Activated CD4-positive, alpha-beta T cell treated with anti-CD3 and anti-CD28 coated beads for 36 hours (primary cell): ENCODE measurements at regions of chr7 and their contacts with region 1.

Region 1: GRCh38 chr7:149873074-149873969 is at the start of gene ATP6V0E2:
- DNase-seq: peak; percentile 96
- ATAC-seq: peak; percentile 84
- H3K4me3 Mint-ChIP-seq: peak within 1 kb of the TSS; percentile 82
- H3K27ac Mint-ChIP-seq: peak within 1 kb of the TSS; percentile 91
- H3K4me1 Mint-ChIP-seq: peaks cover 74% of the 10 kb centered on the region
- H3K27me3 Mint-ChIP-seq: no peaks in the 10 kb centered on the region
- total RNA-seq, gene ATP6V0E2: 33.9 to 41.3 TPM

Region 2: DNA sequence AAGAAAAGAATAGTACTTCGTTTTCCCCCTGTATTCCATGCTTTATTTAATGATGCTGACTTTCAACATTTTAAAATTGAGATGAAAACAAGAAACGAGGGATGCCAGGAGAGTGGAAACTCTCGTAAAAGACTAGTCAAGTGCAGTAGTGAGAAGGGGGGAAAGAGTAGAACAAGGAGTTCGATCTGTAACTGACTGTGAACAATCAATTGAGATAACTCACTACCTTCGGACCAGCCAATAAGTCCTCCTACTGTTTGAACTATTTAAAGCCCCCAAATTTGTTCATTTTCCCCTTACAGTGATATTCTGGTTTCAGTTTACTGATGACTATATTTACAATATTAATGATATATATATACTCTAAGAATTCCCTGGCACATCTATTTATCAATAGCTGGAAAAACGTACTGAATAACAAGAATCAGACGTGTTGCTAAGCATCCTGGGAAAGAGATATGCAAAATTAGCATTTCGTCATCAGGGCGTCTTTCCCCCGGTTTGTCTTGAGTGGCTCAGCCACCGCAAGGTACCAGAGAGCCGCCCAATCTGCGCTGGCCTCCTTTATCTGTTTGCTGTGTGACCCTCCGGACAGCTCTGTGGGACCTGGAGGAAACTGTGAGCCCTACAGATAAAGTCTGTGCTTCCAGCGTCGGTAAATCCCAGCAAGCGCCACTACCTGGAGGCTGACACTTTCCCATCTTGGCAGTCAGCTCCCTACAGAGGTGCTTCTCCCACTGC is 886.1 kb before region 1 on chr7:
- CTCF ChIA-PET with region 1: no interaction called
- POLR2A ChIA-PET with region 1: no interaction called
- intact Hi-C with region 1: loop called in 1 of 2 experiments (anchors 5 kb)
- DNase-seq: peak; percentile 88
- ATAC-seq: peak; percentile 84
- H3K4me3 Mint-ChIP-seq: peak overlapping the region; percentile 90
- H3K27ac Mint-ChIP-seq: peak overlapping the region; percentile 97
- H3K4me1 Mint-ChIP-seq: peaks cover 40% of the 10 kb centered on the region
- H3K27me3 Mint-ChIP-seq: peaks cover 2% of the 10 kb centered on the region

Region 3: DNA sequence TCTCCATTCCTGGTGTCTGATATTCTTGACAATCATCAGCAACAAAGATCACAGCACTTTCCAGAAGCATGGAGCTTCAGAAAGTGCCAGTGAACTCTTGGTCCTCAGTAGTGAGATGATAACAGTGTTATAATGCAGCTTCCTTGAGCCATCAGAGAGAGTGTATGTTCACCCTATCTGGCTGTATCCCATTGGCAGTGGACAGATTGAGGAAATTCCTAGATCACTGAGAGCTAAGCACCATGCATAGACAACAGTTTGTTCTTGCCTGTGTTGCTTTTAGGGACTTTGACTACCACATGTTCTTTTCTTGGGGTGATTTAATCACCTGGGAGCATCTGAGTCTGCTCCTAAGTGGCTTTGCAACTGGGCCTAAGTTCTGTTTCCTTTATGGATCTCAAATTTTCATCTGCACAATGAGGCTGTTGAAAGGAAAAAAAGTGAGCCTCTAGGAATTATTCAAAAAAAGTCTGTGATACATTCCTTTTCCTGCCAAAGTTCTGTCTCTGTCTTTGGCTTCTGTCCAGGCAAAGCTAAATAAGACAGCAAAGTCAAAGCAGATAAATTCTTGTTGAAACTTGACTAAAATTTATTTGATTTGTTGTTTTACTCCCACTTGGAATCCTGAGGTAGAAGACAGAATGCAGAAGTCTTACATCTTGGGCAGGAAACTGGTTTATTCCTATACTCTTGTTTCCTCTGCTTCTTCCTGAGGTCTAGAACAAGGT is 692.4 kb before region 1 on chr7:
- CTCF ChIA-PET with region 1: no interaction called
- POLR2A ChIA-PET with region 1: no interaction called
- intact Hi-C with region 1: no loop called
- DNase-seq: no peak
- ATAC-seq: no peak
- H3K4me3 Mint-ChIP-seq: no peak overlapping the region
- H3K27ac Mint-ChIP-seq: no peak overlapping the region
- H3K4me1 Mint-ChIP-seq: peaks cover 2% of the 10 kb centered on the region
- H3K27me3 Mint-ChIP-seq: no peaks in the 10 kb centered on the region

Region 4: DNA sequence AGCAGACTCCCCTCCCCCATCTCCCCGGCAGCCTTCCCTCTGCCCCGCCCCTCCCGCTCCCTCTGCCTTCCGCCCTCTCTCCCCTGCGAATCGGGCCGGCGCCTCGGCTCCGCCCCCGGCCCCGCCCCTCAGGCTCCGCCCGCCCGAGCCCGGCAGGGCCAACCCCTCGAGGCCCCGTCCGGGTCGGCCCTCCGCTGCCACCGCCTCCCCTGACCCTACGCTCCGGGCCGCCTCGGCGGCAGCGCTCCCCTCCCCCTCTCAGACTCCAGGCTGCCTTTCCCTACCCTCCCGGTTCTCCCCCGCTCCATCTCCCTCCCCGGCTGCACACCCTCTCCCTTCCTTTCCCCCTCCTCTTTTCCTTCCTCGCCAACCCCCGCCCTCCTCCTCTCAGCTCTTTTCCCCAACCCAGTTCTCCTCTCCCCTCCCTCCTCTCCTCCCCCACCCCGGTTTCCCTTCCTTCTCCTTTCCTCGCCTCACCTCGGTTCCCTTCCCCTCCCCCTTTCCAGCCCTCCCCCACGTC is 101.5 kb before region 1 on chr7:
- CTCF ChIA-PET with region 1: no interaction called
- POLR2A ChIA-PET with region 1: no interaction called
- intact Hi-C with region 1: loop called in 1 of 2 experiments (anchors 1 kb)
- DNase-seq: peak; percentile 93
- ATAC-seq: peak; percentile 98
- H3K4me3 Mint-ChIP-seq: peak overlapping the region; percentile 59
- H3K27ac Mint-ChIP-seq: no peak overlapping the region
- H3K4me1 Mint-ChIP-seq: peaks cover 2% of the 10 kb centered on the region
- H3K27me3 Mint-ChIP-seq: peaks cover 9% of the 10 kb centered on the region

Region 5: DNA sequence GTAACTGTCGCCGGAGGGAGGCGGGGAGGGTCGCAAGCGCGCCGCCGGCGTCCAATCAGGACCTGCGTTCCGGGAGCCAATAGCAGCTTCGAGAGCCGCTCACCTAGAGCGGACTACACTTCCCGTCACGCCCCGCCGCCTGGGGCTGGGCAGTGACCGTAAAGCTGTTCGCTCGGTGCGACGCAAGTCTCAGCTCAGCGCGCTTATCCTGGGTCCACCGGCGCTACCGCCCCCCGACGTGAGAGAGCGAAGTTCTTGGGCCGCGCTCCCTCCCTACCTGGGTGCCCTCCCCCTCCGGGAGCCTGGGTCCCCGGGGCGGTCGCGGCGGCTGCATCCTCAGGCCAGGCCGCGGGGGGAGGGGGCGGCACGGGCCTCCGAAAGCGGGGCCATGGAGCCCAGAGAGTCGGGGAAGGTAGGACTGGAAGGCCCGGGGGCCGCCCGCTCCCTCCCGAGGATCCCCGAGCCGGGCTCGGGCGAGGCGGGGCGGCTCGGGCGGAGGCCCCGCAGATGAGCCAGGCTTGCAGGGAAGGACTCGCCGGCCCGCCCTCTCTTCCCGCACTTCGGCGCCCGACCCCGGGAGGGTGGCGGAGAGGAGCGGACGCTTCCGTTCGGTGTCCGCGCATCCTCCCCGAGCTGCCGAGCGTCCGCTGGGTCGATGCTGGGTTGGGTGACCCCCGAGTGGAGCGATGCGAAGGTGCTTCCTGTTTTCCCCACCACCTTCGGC is 34.9 kb before region 1 on chr7 and contains the start of gene ZNF862:
- CTCF ChIA-PET with region 1: interaction called, 9 read pairs
- POLR2A ChIA-PET with region 1: interaction called, 3 read pairs
- intact Hi-C with region 1: loop called (anchors 1 to 2 kb)
- DNase-seq: peak; percentile 98
- ATAC-seq: peak; percentile 98
- H3K4me3 Mint-ChIP-seq: peak within 1 kb of the TSS; percentile 78
- H3K27ac Mint-ChIP-seq: peak within 1 kb of the TSS; percentile 74
- H3K4me1 Mint-ChIP-seq: peaks cover 28% of the 10 kb centered on the region
- H3K27me3 Mint-ChIP-seq: no peaks in the 10 kb centered on the region
- total RNA-seq, gene ZNF862: 17.6 to 18.3 TPM

Region 6: GRCh38 chr7:149854611-149855360 is 18.5 kb before region 1 on chr7:
- CTCF ChIA-PET with region 1: interaction called, 26 read pairs
- POLR2A ChIA-PET with region 1: interaction called, 4 read pairs
- intact Hi-C with region 1: loop called in 1 of 2 experiments (anchors 2 kb)
- DNase-seq: peak; percentile 50
- ATAC-seq: peak; percentile 62
- H3K4me3 Mint-ChIP-seq: no peak overlapping the region
- H3K27ac Mint-ChIP-seq: peak overlapping the region; percentile 68
- H3K4me1 Mint-ChIP-seq: peaks cover 57% of the 10 kb centered on the region
- H3K27me3 Mint-ChIP-seq: no peaks in the 10 kb centered on the region

Region 7: DNA sequence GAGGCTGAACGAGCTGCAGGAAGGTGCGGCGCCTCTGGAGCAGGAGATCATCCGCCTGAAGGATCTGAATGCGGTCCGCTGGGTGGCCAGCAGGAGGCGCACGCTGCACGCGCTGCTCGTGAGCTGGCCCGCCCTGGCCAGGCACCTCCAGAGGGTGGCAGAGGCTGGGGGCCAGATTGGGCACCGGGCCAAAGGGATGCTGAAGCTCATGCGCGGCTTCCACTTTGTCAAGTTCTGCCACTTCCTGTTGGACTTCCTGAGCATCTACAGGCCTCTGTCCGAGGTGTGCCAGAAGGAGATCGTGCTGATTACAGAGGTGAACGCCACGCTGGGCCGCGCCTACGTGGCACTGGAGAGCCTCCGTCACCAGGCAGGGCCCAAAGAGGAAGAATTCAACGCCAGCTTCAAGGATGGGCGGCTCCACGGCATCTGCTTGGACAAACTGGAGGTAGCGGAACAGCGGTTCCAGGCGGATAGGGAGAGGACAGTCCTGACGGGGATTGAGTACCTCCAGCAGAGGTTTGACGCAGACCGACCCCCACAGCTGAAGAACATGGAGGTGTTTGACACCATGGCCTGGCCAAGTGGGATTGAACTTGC is 11.8 kb before region 1 on chr7:
- CTCF ChIA-PET with region 1: interaction called, 26 read pairs
- POLR2A ChIA-PET with region 1: no interaction called
- intact Hi-C with region 1: no loop called
- DNase-seq: peak; percentile 61
- ATAC-seq: no peak
- H3K4me3 Mint-ChIP-seq: no peak overlapping the region
- H3K27ac Mint-ChIP-seq: no peak overlapping the region
- H3K4me1 Mint-ChIP-seq: peaks cover 50% of the 10 kb centered on the region
- H3K27me3 Mint-ChIP-seq: no peaks in the 10 kb centered on the region

Region 8: DNA sequence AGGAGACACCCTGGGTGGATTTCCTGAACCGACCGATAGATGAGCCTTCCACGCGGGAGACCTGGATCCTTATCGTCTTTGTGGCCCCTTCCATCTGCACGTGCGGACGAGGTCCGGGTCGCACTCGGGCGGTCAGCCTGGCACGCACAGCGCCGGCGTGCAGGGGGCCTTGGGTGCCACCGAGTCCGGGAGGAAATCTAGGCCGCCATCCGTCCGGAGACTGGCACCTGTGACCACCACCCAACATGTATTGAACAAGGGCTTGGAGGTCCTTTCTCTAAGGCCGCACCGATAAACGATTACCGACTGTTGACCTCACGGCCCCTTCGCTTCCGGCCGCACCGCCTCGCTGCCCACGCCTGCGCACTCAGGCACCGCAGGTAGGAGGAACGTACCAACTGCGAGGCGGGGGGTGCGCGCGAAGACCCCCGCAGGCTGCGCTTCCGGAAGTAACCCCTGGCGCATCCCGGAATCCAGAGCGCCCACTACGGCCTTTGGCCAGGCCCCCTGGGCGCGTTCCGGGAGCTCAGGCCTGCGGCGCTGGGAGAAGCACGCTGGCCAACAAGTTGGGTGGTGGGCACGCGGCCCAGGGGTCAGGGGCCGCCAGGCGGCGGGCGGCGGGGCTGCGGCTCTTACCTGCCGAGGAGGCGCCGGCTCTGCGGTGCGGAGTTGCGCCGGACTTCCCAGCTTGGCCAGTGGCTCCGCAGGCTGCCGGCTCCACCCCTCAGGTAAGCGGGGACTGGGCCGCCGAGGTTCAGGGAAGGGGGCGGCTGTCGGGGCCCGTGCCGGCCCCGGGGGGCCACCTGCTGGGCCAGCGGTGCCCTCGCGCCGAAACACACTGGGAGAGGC is 449.7 kb after region 1 on chr7 and contains the starts of genes ACTR3C and LRRC61:
- CTCF ChIA-PET with region 1: no interaction called
- POLR2A ChIA-PET with region 1: no interaction called
- intact Hi-C with region 1: loop called in 1 of 2 experiments (anchors 5 kb)
- DNase-seq: peak; percentile 78
- ATAC-seq: peak; percentile 24
- H3K4me3 Mint-ChIP-seq: peak within 1 kb of the TSS; percentile 91
- H3K27ac Mint-ChIP-seq: peak within 1 kb of the TSS; percentile 99
- H3K4me1 Mint-ChIP-seq: peaks cover 52% of the 10 kb centered on the region
- H3K27me3 Mint-ChIP-seq: no peaks in the 10 kb centered on the region
- total RNA-seq, gene ACTR3C: 3.2 to 4.7 TPM
- total RNA-seq, gene LRRC61: 13.0 to 17.4 TPM